ENCODE measurements at regions of chr1 and their contacts with region 1.

Region 1: GRCh38 chr1:12215118-12215961 is 14.5 kb upstream of the VPS13D start:
- DNase-seq: no peak
- H3K4me3 ChIP-seq: no peak overlapping the region
- H3K27ac ChIP-seq: no peak overlapping the region
- H3K4me1 ChIP-seq: no peaks in the 10 kb centered on the region
- H3K27me3 ChIP-seq: peaks cover 5% of the 10 kb centered on the region; the same call in 1 of the 2 replicates
- CTCF ChIP-seq: no peak

Region 2: DNA sequence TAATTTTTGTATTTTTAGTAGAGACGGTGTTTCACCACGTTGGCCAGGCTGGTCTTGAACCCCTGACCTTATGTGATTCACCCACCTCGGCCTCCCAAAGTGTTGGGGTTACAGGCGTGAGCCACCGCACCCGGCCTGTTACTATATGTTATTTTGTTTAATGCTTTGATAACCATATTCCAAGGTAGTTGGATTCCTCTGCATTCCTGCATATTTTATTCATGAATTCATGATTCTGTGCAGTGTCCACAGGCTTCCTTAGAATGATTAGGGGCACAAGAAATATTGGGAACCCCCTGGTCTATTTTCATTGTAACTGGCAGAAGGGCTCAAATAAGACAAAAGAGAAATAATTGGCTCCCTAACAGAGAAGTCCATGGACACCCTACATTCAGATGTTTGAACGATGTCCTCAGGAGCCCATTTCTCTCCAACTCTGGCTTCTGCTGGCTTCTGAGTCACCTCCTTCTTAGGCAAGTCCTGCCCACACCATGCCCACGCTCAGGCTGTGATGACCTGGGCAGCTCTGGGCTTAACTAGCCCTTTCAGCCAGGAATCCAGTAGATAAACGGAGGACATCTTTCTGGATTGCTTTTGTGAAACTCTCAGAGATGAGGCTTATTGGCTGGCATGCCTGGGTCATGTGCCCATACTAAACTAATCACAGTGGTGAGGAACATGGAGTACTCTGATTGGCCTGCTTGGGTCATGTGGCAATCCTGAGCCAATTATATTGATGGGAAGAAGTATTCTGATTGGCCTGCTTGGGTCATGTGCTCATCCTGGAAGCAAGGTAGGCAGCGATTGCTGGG is 119.7 kb before region 1 on chr1:
- CTCF ChIA-PET with region 1: no interaction called
- POLR2A ChIA-PET with region 1: no interaction called
- intact Hi-C with region 1: no loop called
- DNase-seq: peak in 1 of 2 experiments; percentile 59
- H3K4me3 ChIP-seq: no peak overlapping the region
- H3K27ac ChIP-seq: no peak overlapping the region
- H3K4me1 ChIP-seq: no peaks in the 10 kb centered on the region
- H3K27me3 ChIP-seq: peaks cover 5% of the 10 kb centered on the region; the same call in 1 of the 2 replicates
- CTCF ChIP-seq: no peak

Region 3: DNA sequence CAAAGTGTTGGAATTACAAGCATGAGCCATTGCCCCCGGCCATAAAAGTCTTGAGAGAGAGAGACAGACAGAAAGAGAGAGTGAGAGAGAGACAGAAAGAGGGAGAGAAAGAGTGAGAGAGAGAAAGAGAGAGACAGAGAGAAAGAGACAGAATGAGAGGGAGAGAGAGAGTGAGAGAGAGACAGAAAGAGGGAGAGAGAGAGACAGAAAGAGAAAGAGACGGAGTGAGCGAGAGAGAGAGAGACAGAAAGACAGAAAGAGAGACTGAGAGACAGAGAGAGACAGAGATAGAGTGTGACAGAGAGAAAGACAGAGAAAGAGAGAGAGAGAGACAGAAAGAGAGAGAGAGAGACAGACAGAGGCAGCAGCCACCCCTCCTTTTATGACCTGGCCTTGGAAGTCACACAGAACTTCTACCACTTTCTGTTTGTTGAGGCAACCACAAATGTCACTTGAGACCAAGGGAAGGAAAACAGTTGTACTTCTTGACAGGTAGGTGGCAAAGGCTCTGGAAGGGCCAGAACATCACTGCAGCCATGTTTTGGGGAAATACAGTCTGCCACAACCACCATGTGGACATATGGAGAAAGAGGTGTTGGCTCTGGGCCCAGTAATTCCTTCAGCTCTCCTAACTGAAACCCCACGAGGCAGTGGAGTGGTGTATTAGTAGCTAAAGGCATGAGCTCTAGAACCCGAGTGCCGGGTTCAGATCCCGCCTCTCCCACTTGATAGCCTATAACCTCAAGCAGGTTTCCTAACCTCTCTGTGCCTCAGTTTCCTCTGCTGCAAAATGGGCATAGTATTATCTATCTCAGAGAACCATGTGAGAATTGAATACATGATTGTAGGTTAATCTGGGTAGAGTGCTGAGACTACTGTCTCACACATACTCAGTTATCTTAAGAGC is 101.7 kb before region 1 on chr1:
- CTCF ChIA-PET with region 1: no interaction called
- POLR2A ChIA-PET with region 1: no interaction called
- intact Hi-C with region 1: no loop called
- DNase-seq: no peak
- H3K4me3 ChIP-seq: no peak overlapping the region
- H3K27ac ChIP-seq: no peak overlapping the region
- H3K4me1 ChIP-seq: no peaks in the 10 kb centered on the region
- H3K27me3 ChIP-seq: no peaks in the 10 kb centered on the region
- CTCF ChIP-seq: no peak

Region 4: GRCh38 chr1:12269351-12269750 is 54.0 kb after region 1 on chr1:
- CTCF ChIA-PET with region 1: no interaction called
- POLR2A ChIA-PET with region 1: no interaction called
- intact Hi-C with region 1: loop called (anchors 5 kb)
- DNase-seq: no peak
- H3K4me3 ChIP-seq: no peak overlapping the region
- H3K27ac ChIP-seq: no peak overlapping the region
- H3K4me1 ChIP-seq: no peaks in the 10 kb centered on the region
- H3K27me3 ChIP-seq: no peaks in the 10 kb centered on the region
- CTCF ChIP-seq: no peak